ENCODE measurements at regions of chr17 and their contacts with region 1.

Region 1: DNA sequence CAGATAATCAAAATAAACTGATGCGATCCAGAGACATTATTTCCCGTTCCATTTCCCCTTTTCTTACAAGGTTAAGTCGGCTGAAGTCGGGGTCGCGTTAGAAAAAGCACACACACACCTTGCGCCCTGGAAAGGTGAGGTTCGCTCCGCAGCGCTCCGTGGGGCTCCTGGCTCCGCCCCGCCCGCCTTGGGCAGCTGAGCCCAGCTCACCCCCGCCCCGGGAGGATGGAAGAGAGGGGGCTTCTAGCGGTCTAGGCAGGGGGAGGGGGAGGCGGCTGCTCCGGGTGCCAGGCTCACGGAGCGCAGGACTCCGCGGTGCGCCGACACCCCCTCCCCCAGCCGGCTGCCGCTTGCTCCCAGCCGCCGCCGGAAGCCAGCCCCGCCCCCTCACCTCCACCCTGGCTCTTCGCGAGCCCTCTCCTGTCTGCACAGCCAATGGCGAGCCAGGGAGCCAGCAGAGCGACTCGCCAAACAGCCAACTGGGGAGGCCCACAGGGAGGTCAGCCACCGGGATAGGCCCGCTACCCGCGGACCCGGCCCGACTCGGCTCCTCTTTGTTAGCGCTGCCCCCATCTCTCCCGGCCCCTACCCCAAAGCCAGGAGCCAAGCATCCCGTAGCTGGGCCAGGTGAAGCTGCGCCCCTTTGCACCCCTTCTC is 30.4 kb downstream of the FAM222B start:
- DNase-seq: peak; percentile 98
- H3K4me3 Mint-ChIP-seq: peak overlapping the region; percentile 82
- H3K27ac Mint-ChIP-seq: peak overlapping the region; percentile 92
- H3K4me1 Mint-ChIP-seq: peaks cover 43% of the 10 kb centered on the region
- H3K27me3 Mint-ChIP-seq: no peaks in the 10 kb centered on the region

Region 2: GRCh38 chr17:28717578-28718333 is 94.5 kb before region 1 on chr17 and contains the start of gene RAB34:
- CTCF ChIA-PET with region 1: interaction called, 4 read pairs
- POLR2A ChIA-PET with region 1: no interaction called
- intact Hi-C with region 1: loop called (anchors 2 kb)
- DNase-seq: peak; percentile 20
- H3K4me3 Mint-ChIP-seq: peak within 1 kb of the TSS; percentile 14
- H3K27ac Mint-ChIP-seq: peak within 1 kb of the TSS; percentile 71
- H3K4me1 Mint-ChIP-seq: peaks cover 30% of the 10 kb centered on the region
- H3K27me3 Mint-ChIP-seq: peaks cover 16% of the 10 kb centered on the region
- total RNA-seq, gene RAB34: 4.9 to 6.6 TPM

Region 3: GRCh38 chr17:28828294-28829040 is 16.2 kb after region 1 on chr17:
- CTCF ChIA-PET with region 1: no interaction called
- POLR2A ChIA-PET with region 1: no interaction called
- intact Hi-C with region 1: no loop called
- DNase-seq: peak; percentile 3
- H3K4me3 Mint-ChIP-seq: no peak overlapping the region
- H3K27ac Mint-ChIP-seq: no peak overlapping the region
- H3K4me1 Mint-ChIP-seq: peaks cover 6% of the 10 kb centered on the region
- H3K27me3 Mint-ChIP-seq: no peaks in the 10 kb centered on the region

Region 4: DNA sequence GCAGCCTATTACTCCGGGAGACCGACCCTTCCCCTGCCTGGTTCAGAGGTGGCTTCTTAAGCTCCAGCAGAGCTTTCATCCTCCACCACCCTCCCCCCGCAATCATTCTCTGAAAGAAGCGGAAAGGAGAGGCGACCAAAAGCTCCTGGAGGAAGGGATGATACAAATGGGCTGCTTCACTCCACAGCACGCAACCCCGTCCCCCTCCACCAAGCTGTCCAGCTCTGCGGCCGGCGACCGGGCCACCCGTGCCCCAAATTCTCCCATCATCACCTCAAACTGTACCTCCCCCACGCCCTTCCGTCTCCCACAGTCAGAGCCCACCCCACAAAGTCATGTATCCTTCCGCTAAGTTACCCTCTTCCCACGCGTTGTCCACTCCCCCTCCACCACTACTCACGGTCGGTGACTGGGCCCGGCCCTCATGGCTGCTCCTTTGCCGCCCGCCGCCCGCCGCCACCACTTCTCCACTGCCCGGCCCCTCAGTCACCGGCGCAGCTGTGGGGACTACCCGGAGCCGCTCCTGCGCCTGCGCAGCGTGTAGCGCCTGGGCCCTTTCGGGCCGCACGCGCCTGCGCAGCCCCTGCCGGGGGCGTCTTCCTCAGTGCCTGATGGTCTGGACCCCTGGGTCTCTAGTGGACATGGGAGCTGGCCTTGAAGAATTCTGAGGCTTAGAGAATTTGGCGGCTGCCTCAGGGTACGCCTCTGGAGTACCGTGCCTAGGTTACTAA is 30.2 kb after region 1 on chr17 and contains the start of gene FAM222B:
- CTCF ChIA-PET with region 1: interaction called, 6 read pairs
- POLR2A ChIA-PET with region 1: interaction called, 6 read pairs
- intact Hi-C with region 1: loop called (anchors 1 kb)
- DNase-seq: peak; percentile 91
- H3K4me3 Mint-ChIP-seq: peak within 1 kb of the TSS; percentile 95
- H3K27ac Mint-ChIP-seq: peak within 1 kb of the TSS; percentile 88
- H3K4me1 Mint-ChIP-seq: peaks cover 24% of the 10 kb centered on the region
- H3K27me3 Mint-ChIP-seq: no peaks in the 10 kb centered on the region
- total RNA-seq, gene FAM222B: 18.6 to 21.5 TPM

Region 5: GRCh38 chr17:28854457-28855350 is 42.5 kb after region 1 on chr17 and contains the start of gene ERAL1:
- CTCF ChIA-PET with region 1: no interaction called
- POLR2A ChIA-PET with region 1: no interaction called
- intact Hi-C with region 1: no loop called
- DNase-seq: peak; percentile 92
- H3K4me3 Mint-ChIP-seq: peak within 1 kb of the TSS; percentile 81
- H3K27ac Mint-ChIP-seq: peak within 1 kb of the TSS; percentile 86
- H3K4me1 Mint-ChIP-seq: peaks cover 23% of the 10 kb centered on the region
- H3K27me3 Mint-ChIP-seq: no peaks in the 10 kb centered on the region
- total RNA-seq, gene ERAL1: 43.0 to 48.5 TPM

Region 6: DNA sequence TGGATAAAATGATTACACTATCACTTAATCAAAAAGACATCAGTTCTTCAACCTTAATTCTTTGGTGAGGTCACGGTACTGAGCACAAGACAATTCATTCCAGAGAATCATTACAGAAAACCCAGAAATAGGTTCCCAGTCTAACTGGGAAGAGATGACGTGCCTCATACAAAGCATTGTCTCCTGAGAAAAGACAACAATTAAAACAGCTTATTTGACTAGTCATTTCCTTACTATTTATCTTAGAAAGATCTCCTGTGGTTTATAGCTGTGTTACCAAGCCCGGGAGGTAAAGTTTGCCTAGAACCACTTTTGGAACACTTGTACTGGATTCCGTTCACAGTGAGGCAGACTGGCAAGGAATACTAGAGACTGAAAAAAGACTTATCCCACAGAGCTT is 134.0 kb after region 1 on chr17:
- CTCF ChIA-PET with region 1: interaction called, 4 read pairs
- POLR2A ChIA-PET with region 1: interaction called, 3 read pairs
- intact Hi-C with region 1: loop called (anchors 2 kb)
- DNase-seq: no peak
- H3K4me3 Mint-ChIP-seq: peak overlapping the region; percentile 36
- H3K27ac Mint-ChIP-seq: peak overlapping the region; percentile 68
- H3K4me1 Mint-ChIP-seq: peaks cover 68% of the 10 kb centered on the region
- H3K27me3 Mint-ChIP-seq: no peaks in the 10 kb centered on the region